ENCODE measurements at regions of chr17 and their contacts with region 1.

Region 1: GRCh38 chr17:807523-808294 is 25.6 kb downstream of the MRM3 start:
- DNase-seq: no peak
- ATAC-seq: no peak
- H3K4me3 ChIP-seq: no peak overlapping the region
- H3K27ac ChIP-seq: no peak overlapping the region
- H3K4me1 ChIP-seq: no peaks in the 10 kb centered on the region
- CTCF ChIP-seq: no peak
- EP300 ChIP-seq: no peak
- POLR2A ChIP-seq: no peak
- RAD21 ChIP-seq: no peak

Region 2: DNA sequence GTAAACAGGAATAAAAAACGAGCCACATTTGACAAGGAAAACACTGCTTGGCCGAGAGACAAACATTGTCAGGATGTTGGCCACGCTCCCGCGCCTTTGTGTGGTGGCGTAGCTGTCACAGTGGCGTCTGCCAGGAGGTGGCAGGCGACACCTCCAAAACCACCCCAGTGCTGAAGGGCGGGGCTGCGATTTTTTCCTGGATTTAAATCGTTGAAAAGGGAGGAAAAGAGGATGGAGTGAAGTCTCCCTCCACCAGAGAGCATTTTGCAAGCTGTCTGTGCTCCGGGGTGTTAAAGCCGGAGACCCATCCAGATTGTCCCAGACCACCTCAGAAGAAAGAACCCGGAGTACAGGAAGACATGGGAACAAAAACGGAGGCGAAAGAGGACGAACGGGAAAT is 12.8 kb before region 1 on chr17:
- CTCF ChIA-PET with region 1: interaction called, 24 read pairs
- POLR2A ChIA-PET with region 1: no interaction called
- DNase-seq: peak; percentile 79 to 87
- ATAC-seq: peak; percentile 65 to 80
- H3K4me3 ChIP-seq: no peak overlapping the region
- H3K27ac ChIP-seq: peak overlapping the region in 1 of 2 experiments; percentile 17; a peak in 2 of 6 replicates
- H3K4me1 ChIP-seq: peaks cover 7% of the 10 kb centered on the region
- CTCF ChIP-seq: peak; percentile 92
- EP300 ChIP-seq: no peak
- POLR2A ChIP-seq: no peak
- RAD21 ChIP-seq: peak; percentile 97 to 98